ENCODE measurements at regions of chr15 and their contacts with region 1.

Region 1: DNA sequence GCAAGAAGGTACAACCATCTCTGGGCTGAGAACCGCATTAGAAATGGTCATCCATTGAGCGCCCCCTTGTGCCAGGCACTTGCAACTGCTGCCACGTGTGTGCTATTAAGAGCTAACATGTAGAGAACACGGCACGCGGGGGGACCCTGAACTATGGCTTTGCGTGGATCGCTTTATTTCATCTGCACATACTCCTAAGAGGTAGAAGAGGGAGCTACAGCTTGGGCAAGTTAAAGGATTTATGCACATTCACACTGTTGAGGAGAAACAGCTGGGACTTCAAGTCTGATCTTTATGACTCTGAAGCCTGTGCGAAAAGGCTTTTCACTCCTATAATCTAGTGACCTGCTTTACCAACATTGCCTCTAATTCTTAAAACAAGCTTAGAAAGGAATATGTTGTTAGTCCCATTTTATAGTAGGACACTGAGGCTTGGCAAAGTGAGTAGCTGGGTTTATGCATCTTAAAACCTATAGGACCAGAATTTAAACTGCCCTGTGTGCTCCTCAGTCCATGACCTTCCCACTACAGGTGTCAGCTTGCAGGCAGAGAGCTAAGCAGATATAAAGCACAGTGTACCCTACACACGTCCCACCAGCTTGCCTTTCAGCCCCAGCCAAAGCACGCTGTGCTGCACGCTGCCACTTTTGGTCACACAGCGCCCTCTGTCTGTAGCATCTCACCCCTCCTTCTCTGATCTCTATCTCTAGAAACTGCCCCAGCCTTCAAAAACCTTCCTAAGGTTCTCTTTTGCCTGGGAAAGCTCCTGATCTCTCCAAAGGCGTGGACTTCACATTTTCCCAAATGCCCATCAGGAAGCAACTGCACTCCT is 57.8 kb downstream of the STARD5 start:
- DNase-seq: peak; percentile 89
- H3K4me3 Mint-ChIP-seq: peak overlapping the region; percentile 36
- H3K27ac Mint-ChIP-seq: no peak overlapping the region
- H3K4me1 Mint-ChIP-seq: peaks cover 14% of the 10 kb centered on the region
- H3K27me3 Mint-ChIP-seq: peaks cover 73% of the 10 kb centered on the region
- CTCF ChIP-seq: peak; percentile 92

Region 2: DNA sequence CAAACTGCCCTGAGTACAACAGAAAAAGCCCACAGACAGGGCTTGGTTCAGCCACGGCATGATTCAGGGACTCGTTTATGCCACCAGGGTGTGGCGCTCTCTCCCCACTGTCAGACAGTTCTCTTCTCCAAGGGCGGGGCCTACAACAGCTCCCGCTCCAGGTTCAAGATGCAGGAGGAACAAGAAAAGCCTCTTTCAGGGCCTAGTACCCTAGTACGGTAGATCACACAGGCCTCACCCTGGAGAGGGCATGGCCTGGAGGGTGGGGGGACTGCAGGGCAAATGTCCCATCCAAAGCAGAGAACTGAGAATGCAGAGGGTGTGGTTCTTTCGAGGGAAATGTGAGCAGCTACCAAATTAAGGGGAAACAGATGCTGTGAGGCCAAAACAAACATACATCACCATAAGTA is 288.5 kb before region 1 on chr15:
- CTCF ChIA-PET with region 1: interaction called, 7 read pairs
- intact Hi-C with region 1: loop called (anchors 5 kb)
- DNase-seq: peak; percentile 53
- H3K4me3 Mint-ChIP-seq: no peak overlapping the region
- H3K27ac Mint-ChIP-seq: peak overlapping the region; percentile 72
- H3K4me1 Mint-ChIP-seq: peaks cover 31% of the 10 kb centered on the region
- H3K27me3 Mint-ChIP-seq: no peaks in the 10 kb centered on the region
- CTCF ChIP-seq: peak; percentile 19

Region 3: GRCh38 chr15:81106560-81106959 is 159.6 kb before region 1 on chr15:
- CTCF ChIA-PET with region 1: interaction called, 85 read pairs
- intact Hi-C with region 1: loop called (anchors 1 kb)
- DNase-seq: peak; percentile 62
- H3K4me3 Mint-ChIP-seq: no peak overlapping the region
- H3K27ac Mint-ChIP-seq: no peak overlapping the region
- H3K4me1 Mint-ChIP-seq: no peaks in the 10 kb centered on the region
- H3K27me3 Mint-ChIP-seq: peaks cover 74% of the 10 kb centered on the region
- CTCF ChIP-seq: peak; percentile 71

Region 4: DNA sequence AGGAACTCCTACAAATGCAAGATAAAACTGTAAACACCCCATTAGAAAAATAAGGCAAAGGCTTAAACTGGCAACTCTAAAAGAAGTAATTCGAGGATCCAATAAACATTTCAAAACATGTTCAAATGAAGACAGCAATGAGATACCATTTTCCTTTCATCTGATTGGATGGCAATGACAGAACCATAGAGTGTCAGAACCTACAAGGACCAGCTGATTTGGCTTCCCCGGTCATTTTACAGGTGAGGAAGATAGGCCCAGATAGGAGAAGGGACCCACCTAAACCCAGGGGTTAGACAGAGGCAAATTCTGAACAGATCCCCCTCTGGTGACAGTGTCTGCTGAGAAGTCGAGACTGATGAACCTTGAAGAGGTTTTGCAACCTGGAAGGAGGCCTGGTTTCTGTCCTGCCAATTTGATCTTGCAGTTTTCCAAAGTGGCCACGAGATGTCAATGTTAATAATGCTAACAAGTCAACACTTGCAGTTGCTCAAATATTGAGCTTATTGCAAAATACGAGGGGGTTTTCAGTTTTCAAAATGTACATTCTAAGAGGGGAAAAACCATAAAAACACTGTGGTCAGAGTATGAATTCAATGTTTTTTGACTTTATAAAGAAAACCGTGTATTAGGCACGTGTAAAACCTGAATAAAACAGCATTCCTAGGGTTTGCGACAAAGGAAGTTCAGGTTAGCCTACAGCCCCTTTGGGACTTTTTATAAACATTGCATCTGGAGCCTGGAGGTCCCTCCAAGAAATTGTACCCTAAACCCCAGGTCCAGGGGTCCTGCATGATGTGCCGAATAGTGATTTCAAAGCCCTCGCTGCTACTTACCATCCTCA is 110.6 kb before region 1 on chr15:
- CTCF ChIA-PET with region 1: interaction called, 98 read pairs
- intact Hi-C with region 1: loop called (anchors 1 kb)
- DNase-seq: peak; percentile 33
- H3K4me3 Mint-ChIP-seq: no peak overlapping the region
- H3K27ac Mint-ChIP-seq: no peak overlapping the region
- H3K4me1 Mint-ChIP-seq: no peaks in the 10 kb centered on the region
- H3K27me3 Mint-ChIP-seq: peaks cover 56% of the 10 kb centered on the region
- CTCF ChIP-seq: peak; percentile 40

Region 5: DNA sequence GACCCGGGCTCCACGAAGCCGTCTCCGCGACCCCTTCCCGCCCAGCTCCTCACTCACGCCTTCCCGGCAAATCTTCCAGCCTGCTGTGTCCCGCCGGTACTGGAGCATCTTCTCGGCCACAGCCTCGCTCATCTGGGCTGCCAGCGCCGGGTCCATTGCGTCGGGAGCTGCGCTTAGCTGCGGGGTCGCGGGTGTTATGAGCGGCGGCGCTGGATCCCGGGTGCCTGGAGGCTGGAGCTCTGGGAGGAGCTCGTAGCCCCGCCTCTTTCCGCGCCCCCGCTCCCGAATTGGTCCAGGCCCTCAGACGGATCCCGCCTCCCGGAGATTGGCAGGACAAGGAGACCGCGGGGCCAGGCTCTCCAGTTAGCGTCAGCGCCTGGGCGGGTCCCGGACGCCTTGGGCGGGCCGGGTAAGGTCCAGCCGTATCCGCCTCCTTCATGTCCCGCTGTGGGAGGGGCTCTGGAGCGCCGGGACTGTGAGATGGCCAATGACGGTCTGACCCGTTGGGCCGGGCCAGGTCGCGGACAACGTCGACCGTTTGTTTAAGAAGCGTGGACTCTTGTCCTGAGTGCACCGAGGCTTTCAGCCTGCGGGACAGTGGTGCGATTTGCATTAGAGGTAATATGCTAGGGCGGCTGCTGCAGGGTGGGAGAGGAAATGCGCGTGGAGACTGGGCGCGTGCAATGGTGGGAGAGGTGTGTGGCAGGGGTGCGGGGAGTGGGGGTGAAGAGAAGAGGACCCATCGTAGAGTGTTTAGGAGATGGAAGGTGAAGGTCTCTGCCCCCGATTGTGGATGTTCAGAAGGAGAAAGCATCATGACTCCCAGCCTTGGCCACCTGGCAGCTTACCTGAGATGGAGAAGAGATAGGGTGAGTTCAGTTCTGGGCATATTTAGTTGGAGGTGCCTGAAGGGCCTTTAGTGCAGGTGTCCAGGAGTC is 58.1 kb after region 1 on chr15 and contains the start of gene STARD5:
- CTCF ChIA-PET with region 1: interaction called, 14 read pairs
- intact Hi-C with region 1: no loop called
- DNase-seq: peak; percentile 99
- H3K4me3 Mint-ChIP-seq: peak within 1 kb of the TSS; percentile 89
- H3K27ac Mint-ChIP-seq: peak within 1 kb of the TSS; percentile 72
- H3K4me1 Mint-ChIP-seq: peaks cover 11% of the 10 kb centered on the region
- H3K27me3 Mint-ChIP-seq: peaks cover 10% of the 10 kb centered on the region
- CTCF ChIP-seq: no peak
- total RNA-seq, gene STARD5: 1.4 and 1.9 TPM in 2 replicates